Activated T-helper 2 cell treated with anti-CD3 and anti-CD28 coated beads, Interferon-gamma antibody, Interleukin-2, Interleukin-4, amounts not matched to agents 10 μg/mL and 5 μg/mL and 100 μg/mL, durations not matched to agents 14 hours and 24 hours and 36 hours (primary cell): ENCODE measurements at regions of chr6 and their contacts with region 1.

Region 1: DNA sequence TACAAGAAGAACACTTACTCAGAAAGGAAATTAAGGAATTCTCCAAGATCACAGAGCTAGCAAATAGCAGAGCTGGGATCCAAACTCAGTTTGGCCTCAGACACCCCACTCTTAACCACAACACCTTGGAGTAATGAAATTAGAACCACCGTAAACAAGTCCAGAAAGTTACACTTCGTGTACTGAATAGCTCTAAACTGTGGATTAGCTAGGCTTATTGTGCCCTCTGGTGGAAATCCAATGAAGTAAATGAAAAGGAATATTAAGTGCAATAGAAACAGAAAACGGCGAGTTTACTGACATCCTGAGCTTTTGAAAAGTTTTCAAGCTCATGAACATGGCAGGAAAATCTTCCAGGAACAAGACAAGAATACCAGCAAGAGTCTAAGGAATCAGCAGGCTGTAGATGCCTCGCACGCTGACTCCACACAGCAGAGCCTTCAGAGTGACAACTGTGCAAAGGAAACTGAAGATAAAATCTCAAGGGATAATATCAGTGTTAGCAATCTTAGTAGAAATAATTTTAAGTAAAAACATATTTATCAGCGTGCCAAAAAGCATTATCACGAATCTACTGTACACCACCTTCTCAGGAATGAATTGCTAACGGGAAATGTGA is 34.6 kb downstream of the FBXO5 start:
- DNase-seq: no peak
- H3K4me3 Mint-ChIP-seq: no peak overlapping the region
- H3K27ac Mint-ChIP-seq: no peak overlapping the region
- H3K4me1 Mint-ChIP-seq: peaks cover 15% of the 10 kb centered on the region
- H3K27me3 Mint-ChIP-seq: peaks cover 15% of the 10 kb centered on the region

Region 2: DNA sequence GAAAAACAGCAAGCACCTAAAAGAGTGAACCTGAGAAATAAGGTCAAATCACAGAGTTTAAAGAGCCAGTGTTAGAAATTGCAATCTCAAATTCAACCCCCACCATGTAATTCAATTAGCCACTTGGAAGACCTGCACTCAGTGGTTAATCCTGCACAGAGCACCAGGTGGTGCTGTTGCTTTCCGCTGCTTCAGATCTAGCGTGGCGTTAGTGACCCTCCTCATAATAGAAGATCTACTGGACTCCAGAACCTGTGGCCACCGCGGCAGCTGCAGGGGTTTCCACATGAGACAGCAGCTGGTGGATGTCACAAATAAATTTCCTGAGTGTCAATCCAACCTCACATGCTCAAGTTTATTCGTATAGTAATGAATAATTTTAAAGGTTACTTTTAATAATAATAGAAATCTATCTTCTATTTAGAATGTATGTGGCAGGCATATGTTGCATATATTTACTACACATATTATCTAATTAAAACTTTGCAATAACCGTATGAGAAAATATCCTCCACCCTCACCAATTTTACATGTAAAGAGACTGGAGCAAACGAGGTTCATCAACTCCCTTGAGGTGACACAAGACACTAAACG is 395.5 kb before region 1 on chr6:
- intact Hi-C with region 1: loop called (anchors 1 kb)
- DNase-seq: peak; percentile 11
- H3K4me3 Mint-ChIP-seq: no peak overlapping the region
- H3K27ac Mint-ChIP-seq: no peak overlapping the region
- H3K4me1 Mint-ChIP-seq: no peaks in the 10 kb centered on the region
- H3K27me3 Mint-ChIP-seq: no peaks in the 10 kb centered on the region

Region 3: DNA sequence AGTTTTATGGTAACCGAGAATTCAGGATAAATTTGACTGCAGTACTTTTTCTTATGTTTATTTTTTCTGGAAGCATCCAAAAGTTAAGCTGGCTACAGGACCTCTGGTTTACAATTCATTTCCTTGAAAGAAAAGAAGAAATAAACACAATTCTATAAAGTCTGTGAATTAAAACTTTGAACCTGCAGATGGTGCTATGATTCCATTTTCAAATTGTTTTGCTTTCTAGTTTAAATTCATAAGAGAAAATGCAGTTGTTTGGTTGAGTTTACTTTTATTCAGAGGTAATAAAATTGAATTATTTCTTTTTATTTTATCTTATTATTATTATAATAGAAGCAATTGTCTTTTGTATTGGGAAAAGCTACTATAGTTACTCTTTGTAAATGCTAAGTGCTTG is 199.4 kb before region 1 on chr6:
- intact Hi-C with region 1: loop called (anchors 10 kb)
- DNase-seq: no peak
- H3K4me3 Mint-ChIP-seq: no peak overlapping the region
- H3K27ac Mint-ChIP-seq: no peak overlapping the region
- H3K4me1 Mint-ChIP-seq: no peaks in the 10 kb centered on the region
- H3K27me3 Mint-ChIP-seq: no peaks in the 10 kb centered on the region

Region 4: DNA sequence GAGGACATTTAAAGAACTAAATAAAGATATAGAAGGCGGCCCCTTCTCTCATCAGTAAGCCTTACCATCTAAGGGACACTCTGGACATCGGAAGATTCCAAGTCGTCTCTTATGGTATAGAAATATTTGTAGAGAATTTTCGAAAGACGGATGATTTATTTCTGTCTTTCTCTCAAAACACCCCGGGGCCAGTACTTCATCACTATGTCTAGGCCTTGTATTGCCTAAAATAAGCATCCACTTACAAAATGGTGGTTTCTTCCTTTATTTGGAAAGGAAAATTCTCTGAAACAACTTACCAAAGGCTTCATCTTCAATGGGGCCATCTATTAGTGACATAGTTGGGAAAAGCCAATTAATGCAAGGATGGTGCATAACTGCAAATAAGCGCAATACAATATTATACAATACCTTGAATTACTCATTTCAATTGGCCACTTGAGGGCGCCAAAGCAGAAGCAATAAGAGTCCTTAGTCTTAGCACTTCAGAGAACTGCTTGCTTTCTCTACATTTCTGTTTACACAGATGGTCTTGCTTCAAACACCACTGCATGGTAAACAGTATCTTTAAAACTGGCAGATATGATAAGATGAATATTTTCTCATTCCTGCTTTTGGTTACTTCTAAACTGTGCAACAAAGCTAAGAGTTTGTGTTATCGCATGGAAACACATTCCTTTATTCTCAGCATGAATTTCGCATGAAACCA is 84.5 kb before region 1 on chr6:
- intact Hi-C with region 1: loop called (anchors 1 kb)
- DNase-seq: peak; percentile 11
- H3K4me3 Mint-ChIP-seq: no peak overlapping the region
- H3K27ac Mint-ChIP-seq: no peak overlapping the region
- H3K4me1 Mint-ChIP-seq: peaks cover 1% of the 10 kb centered on the region
- H3K27me3 Mint-ChIP-seq: peaks cover 3% of the 10 kb centered on the region

Region 5: DNA sequence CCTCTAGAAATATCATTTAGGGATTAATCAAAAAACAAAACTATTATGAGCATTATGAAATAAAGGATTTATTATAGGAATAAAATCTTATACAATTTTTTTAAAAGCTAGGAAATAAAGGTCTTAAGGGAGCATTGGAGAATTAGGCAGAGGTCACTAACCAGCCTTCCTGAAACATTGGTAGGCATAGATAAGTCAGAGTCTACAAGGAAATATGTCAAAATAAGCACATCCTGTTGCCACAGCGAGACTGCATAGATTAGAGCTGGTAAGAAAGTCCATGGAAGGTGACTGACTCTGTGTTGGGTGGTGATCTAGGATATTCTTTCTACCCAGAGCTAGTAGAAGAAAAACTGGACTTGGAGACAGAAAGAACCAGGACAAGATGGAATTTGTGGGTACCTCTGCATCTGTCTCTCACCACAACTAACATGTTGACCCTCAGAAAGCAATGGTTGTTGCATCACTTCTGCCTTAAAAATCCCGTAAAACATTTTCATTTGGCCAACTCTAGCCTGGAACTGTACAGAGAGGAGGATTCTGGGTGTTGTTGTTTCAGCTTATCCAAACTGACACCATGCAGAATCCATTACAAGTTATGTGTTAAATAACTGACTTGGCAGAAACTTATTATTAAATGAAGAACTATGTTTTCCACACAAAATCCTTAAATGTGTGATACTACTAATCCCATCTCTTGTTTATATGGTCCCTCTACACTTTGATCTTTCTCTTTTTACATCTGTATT is 42.5 kb before region 1 on chr6:
- intact Hi-C with region 1: no loop called
- DNase-seq: no peak
- H3K4me3 Mint-ChIP-seq: no peak overlapping the region
- H3K27ac Mint-ChIP-seq: no peak overlapping the region
- H3K4me1 Mint-ChIP-seq: no peaks in the 10 kb centered on the region
- H3K27me3 Mint-ChIP-seq: no peaks in the 10 kb centered on the region

Region 6: GRCh38 chr6:152922706-152923105 is 25.6 kb before region 1 on chr6:
- intact Hi-C with region 1: no loop called
- DNase-seq: no peak
- H3K4me3 Mint-ChIP-seq: no peak overlapping the region
- H3K27ac Mint-ChIP-seq: no peak overlapping the region
- H3K4me1 Mint-ChIP-seq: no peaks in the 10 kb centered on the region
- H3K27me3 Mint-ChIP-seq: peaks cover 2% of the 10 kb centered on the region

Region 7: GRCh38 chr6:153002607-153003365 is 54.5 kb after region 1 on chr6 and contains the start of gene MTRF1L:
- intact Hi-C with region 1: loop called (anchors 1 kb)
- DNase-seq: peak; percentile 83
- H3K4me3 Mint-ChIP-seq: peak within 1 kb of the TSS; percentile 99
- H3K27ac Mint-ChIP-seq: peak within 1 kb of the TSS; percentile 91
- H3K4me1 Mint-ChIP-seq: peaks cover 34% of the 10 kb centered on the region
- H3K27me3 Mint-ChIP-seq: peaks cover 11% of the 10 kb centered on the region
- total RNA-seq, gene MTRF1L: 24.1 and 24.9 TPM in 2 replicates

Region 8: GRCh38 chr6:153023977-153024708 is 75.9 kb after region 1 on chr6:
- intact Hi-C with region 1: loop called (anchors 2 kb)
- DNase-seq: peak; percentile 32
- H3K4me3 Mint-ChIP-seq: no peak overlapping the region
- H3K27ac Mint-ChIP-seq: no peak overlapping the region
- H3K4me1 Mint-ChIP-seq: peaks cover 4% of the 10 kb centered on the region
- H3K27me3 Mint-ChIP-seq: peaks cover 27% of the 10 kb centered on the region